Activated CD4-positive, alpha-beta T cell treated with anti-CD3 and anti-CD28 coated beads for 36 hours (primary cell): ENCODE measurements at regions of chr12 and their contacts with region 1.

Region 1: GRCh38 chr12:47032644-47033043 is 46.8 kb upstream of the PCED1B start:
- DNase-seq: no peak
- ATAC-seq: peak; percentile 81
- H3K4me3 Mint-ChIP-seq: no peak overlapping the region
- H3K27ac Mint-ChIP-seq: peak overlapping the region; percentile 35
- H3K4me1 Mint-ChIP-seq: peaks cover 40% of the 10 kb centered on the region
- H3K27me3 Mint-ChIP-seq: no peaks in the 10 kb centered on the region

Region 2: DNA sequence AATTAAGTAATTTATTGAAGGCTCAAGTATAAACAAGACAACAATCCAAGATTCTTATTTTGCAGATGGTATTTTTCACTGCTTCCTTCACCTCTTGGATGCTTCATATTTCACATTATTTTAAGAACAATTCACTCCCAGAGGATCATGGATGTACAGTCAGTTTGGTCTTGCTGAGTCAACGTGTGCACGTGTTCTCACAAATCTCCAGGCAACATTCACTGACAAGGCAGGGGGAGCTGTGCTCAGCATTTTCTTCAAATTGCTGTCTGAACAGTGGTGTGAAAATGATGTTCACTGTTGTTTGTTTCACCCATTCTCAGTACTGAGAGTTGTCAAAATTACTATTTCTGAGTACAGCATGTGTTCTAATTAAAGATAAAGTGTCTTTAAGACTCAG is 88.6 kb before region 1 on chr12:
- CTCF ChIA-PET with region 1: no interaction called
- POLR2A ChIA-PET with region 1: no interaction called
- intact Hi-C with region 1: no loop called
- DNase-seq: peak; percentile 11
- ATAC-seq: no peak
- H3K4me3 Mint-ChIP-seq: no peak overlapping the region
- H3K27ac Mint-ChIP-seq: no peak overlapping the region
- H3K4me1 Mint-ChIP-seq: no peaks in the 10 kb centered on the region
- H3K27me3 Mint-ChIP-seq: peaks cover 2% of the 10 kb centered on the region

Region 3: GRCh38 chr12:47021298-47021697 is 11.3 kb before region 1 on chr12:
- CTCF ChIA-PET with region 1: interaction called, 19 read pairs
- POLR2A ChIA-PET with region 1: no interaction called
- intact Hi-C with region 1: no loop called
- DNase-seq: no peak
- ATAC-seq: peak; percentile 75
- H3K4me3 Mint-ChIP-seq: no peak overlapping the region
- H3K27ac Mint-ChIP-seq: no peak overlapping the region
- H3K4me1 Mint-ChIP-seq: peaks cover 3% of the 10 kb centered on the region
- H3K27me3 Mint-ChIP-seq: peaks cover 7% of the 10 kb centered on the region

Region 4: GRCh38 chr12:47079468-47079980 is 46.9 kb after region 1 on chr12 and contains the starts of genes AMIGO2 and PCED1B:
- CTCF ChIA-PET with region 1: interaction called, 43 read pairs
- POLR2A ChIA-PET with region 1: interaction called, 3 read pairs
- intact Hi-C with region 1: loop called (anchors 2 to 5 kb)
- DNase-seq: peak; percentile 85
- ATAC-seq: peak; percentile 59
- H3K4me3 Mint-ChIP-seq: peak within 1 kb of the TSS; percentile 96
- H3K27ac Mint-ChIP-seq: peak within 1 kb of the TSS; percentile 96
- H3K4me1 Mint-ChIP-seq: peaks cover 73% of the 10 kb centered on the region
- H3K27me3 Mint-ChIP-seq: no peaks in the 10 kb centered on the region
- total RNA-seq, gene AMIGO2: 15.1 to 17.1 TPM
- total RNA-seq, gene PCED1B: 76.3 to 82.3 TPM

Region 5: GRCh38 chr12:47302111-47302671 is 269.5 kb after region 1 on chr12:
- CTCF ChIA-PET with region 1: interaction called, 19 read pairs
- POLR2A ChIA-PET with region 1: no interaction called
- intact Hi-C with region 1: loop called (anchors 1 kb)
- DNase-seq: peak; percentile 35
- ATAC-seq: peak; percentile 74
- H3K4me3 Mint-ChIP-seq: peak overlapping the region; percentile 26
- H3K27ac Mint-ChIP-seq: peak overlapping the region; percentile 86
- H3K4me1 Mint-ChIP-seq: peaks cover 68% of the 10 kb centered on the region
- H3K27me3 Mint-ChIP-seq: no peaks in the 10 kb centered on the region

Region 6: GRCh38 chr12:47636908-47637780 is 604.5 kb after region 1 on chr12:
- CTCF ChIA-PET with region 1: interaction called, 16 read pairs
- POLR2A ChIA-PET with region 1: no interaction called
- intact Hi-C with region 1: loop called in 1 of 2 experiments (anchors 2 kb)
- DNase-seq: peak; percentile 75
- ATAC-seq: no peak
- H3K4me3 Mint-ChIP-seq: no peak overlapping the region
- H3K27ac Mint-ChIP-seq: no peak overlapping the region
- H3K4me1 Mint-ChIP-seq: peaks cover 8% of the 10 kb centered on the region
- H3K27me3 Mint-ChIP-seq: no peaks in the 10 kb centered on the region

Region 7: GRCh38 chr12:47779301-47779942 is 746.8 kb after region 1 on chr12:
- CTCF ChIA-PET with region 1: no interaction called
- POLR2A ChIA-PET with region 1: no interaction called
- intact Hi-C with region 1: loop called in 1 of 2 experiments (anchors 10 kb)
- DNase-seq: peak; percentile 96
- ATAC-seq: peak; percentile 82
- H3K4me3 Mint-ChIP-seq: no peak overlapping the region
- H3K27ac Mint-ChIP-seq: peak overlapping the region; percentile 37
- H3K4me1 Mint-ChIP-seq: peaks cover 29% of the 10 kb centered on the region
- H3K27me3 Mint-ChIP-seq: no peaks in the 10 kb centered on the region